AG04450 (cell line): ENCODE measurements at regions of chr11 and their contacts with region 1.

Region 1: GRCh38 chr11:93089474-93090102 is 108.2 kb downstream of the SLC36A4 start:
- DNase-seq: peak; percentile 11
- H3K4me3 ChIP-seq: no peak overlapping the region
- H3K27ac ChIP-seq: no peak overlapping the region
- H3K27me3 ChIP-seq: no peaks in the 10 kb centered on the region
- CTCF ChIP-seq: peak; percentile 77

Region 2: GRCh38 chr11:93073026-93073425 is 16.6 kb before region 1 on chr11:
- CTCF ChIA-PET with region 1: interaction called, 19 read pairs
- POLR2A ChIA-PET with region 1: no interaction called
- DNase-seq: no peak
- H3K4me3 ChIP-seq: no peak overlapping the region
- H3K27ac ChIP-seq: no peak overlapping the region
- H3K27me3 ChIP-seq: no peaks in the 10 kb centered on the region
- CTCF ChIP-seq: no peak

Region 3: GRCh38 chr11:93099806-93100205 is 10.2 kb after region 1 on chr11:
- CTCF ChIA-PET with region 1: interaction called, 17 read pairs
- POLR2A ChIA-PET with region 1: no interaction called
- DNase-seq: peak; percentile 26
- H3K4me3 ChIP-seq: no peak overlapping the region
- H3K27ac ChIP-seq: no peak overlapping the region
- H3K27me3 ChIP-seq: no peaks in the 10 kb centered on the region
- CTCF ChIP-seq: no peak